ENCODE measurements at regions of chr1 and their contacts with region 1.

Region 1: DNA sequence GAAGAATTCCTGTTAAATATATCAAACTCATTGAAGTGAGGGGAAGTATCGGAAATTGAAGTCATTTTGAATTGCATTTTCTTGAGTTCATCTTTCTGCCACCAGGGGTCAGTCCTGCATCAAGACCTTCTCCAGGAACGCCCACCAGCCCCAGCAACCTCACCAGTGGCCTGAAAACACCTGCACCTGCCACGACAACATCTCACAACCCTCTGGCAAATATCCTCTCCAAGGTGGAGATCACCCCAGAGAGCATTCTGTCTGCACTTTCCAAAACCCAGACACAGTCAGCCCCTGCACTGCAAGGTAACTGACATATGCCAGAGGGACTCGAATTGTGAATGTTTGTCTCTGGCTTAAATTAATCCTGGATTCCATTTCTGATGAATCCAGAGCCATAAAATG is 22.8 kb upstream of the TARS2 start:
- DNase-seq: peak in 3 of 10 donors; percentile 36 to 46 (median 39)
- H3K4me3 ChIP-seq: no peak overlapping the region
- H3K27ac ChIP-seq: no peak overlapping the region
- H3K27me3 ChIP-seq: no peaks in the 10 kb centered on the region
- CTCF ChIP-seq: peak; percentile 65 to 88 (median 76)

Region 2: GRCh38 chr1:150532868-150533302 is 68.5 kb after region 1 on chr1:
- intact Hi-C with region 1: loop called (anchors 5 kb)
- DNase-seq: no peak
- H3K4me3 ChIP-seq: peak overlapping the region in 6 of 59 donors; percentile 1 to 56 (median 40)
- H3K27ac ChIP-seq: peak overlapping the region in 30 of 59 donors; percentile 4 to 78 (median 56)
- H3K27me3 ChIP-seq: no peaks in the 10 kb centered on the region
- CTCF ChIP-seq: peak in 10 of 56 donors; percentile 2 to 41 (median 14)

Measured in dorsolateral prefrontal cortex (tissue), 120 donors.